H1 (cell line): ENCODE measurements at regions of chr2 and their contacts with region 1.

Region 1: GRCh38 chr2:22355816-22356433 is 1029.1 kb upstream of the KLHL29 start:
- DNase-seq: peak in 1 of 2 experiments; percentile 92
- H3K4me3 ChIP-seq: no peak overlapping the region
- H3K27ac ChIP-seq: no peak overlapping the region
- H3K4me1 ChIP-seq: peaks cover 0 to 4% (median 0%) of the 10 kb centered on the region in 4 experiments; a peak in 1 of 7 replicates
- H3K27me3 ChIP-seq: no peaks in the 10 kb centered on the region
- CTCF ChIP-seq: peak; percentile 64 to 84 (median 64)
- EP300 ChIP-seq: no peak
- POLR2A ChIP-seq: no peak
- RAD21 ChIP-seq: peak; percentile 80 to 84

Region 2: GRCh38 chr2:22329211-22330154 is 26.4 kb before region 1 on chr2:
- CTCF ChIA-PET with region 1: interaction called, 12 read pairs
- POLR2A ChIA-PET with region 1: no interaction called
- DNase-seq: no peak
- H3K4me3 ChIP-seq: no peak overlapping the region
- H3K27ac ChIP-seq: no peak overlapping the region
- H3K4me1 ChIP-seq: no peaks in the 10 kb centered on the region
- H3K27me3 ChIP-seq: no peaks in the 10 kb centered on the region
- CTCF ChIP-seq: no peak
- EP300 ChIP-seq: no peak
- POLR2A ChIP-seq: no peak
- RAD21 ChIP-seq: no peak

Region 3: DNA sequence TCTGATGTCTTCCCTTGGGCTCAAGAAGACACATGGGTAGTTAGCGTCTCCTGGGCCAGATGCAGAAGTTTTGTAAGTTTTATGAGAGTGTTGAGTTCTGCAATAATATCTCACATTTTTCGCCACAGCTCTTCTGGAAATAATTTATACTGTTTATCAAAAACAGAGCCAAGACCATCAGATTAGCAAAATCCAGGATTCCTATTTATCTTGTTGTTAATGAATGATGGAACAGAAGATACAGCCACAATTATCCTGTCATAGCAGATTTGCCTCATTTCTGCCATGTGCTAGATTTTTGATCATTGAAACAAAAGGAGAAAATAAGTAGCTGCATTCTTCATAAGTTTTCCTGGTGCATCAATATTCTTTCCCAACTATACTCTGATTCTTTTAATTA is 19.5 kb before region 1 on chr2:
- CTCF ChIA-PET with region 1: interaction called, 13 read pairs
- POLR2A ChIA-PET with region 1: no interaction called
- DNase-seq: no peak
- H3K4me3 ChIP-seq: no peak overlapping the region
- H3K27ac ChIP-seq: no peak overlapping the region
- H3K4me1 ChIP-seq: no peaks in the 10 kb centered on the region
- H3K27me3 ChIP-seq: no peaks in the 10 kb centered on the region
- CTCF ChIP-seq: no peak
- EP300 ChIP-seq: no peak
- POLR2A ChIP-seq: no peak
- RAD21 ChIP-seq: no peak

Region 4: GRCh38 chr2:22375096-22375495 is 19.2 kb after region 1 on chr2:
- CTCF ChIA-PET with region 1: interaction called, 23 read pairs
- POLR2A ChIA-PET with region 1: no interaction called
- DNase-seq: peak in 1 of 2 experiments; percentile 61
- H3K4me3 ChIP-seq: no peak overlapping the region
- H3K27ac ChIP-seq: no peak overlapping the region
- H3K4me1 ChIP-seq: peaks cover 0 to 3% (median 0%) of the 10 kb centered on the region in 4 experiments; a peak in 2 of 7 replicates
- H3K27me3 ChIP-seq: no peaks in the 10 kb centered on the region
- CTCF ChIP-seq: peak; percentile 54 to 70 (median 64)
- EP300 ChIP-seq: no peak
- POLR2A ChIP-seq: no peak
- RAD21 ChIP-seq: peak; percentile 40 to 60

Region 5: GRCh38 chr2:23335550-23335949 is 979.6 kb after region 1 on chr2:
- CTCF ChIA-PET with region 1: no interaction called
- POLR2A ChIA-PET with region 1: no interaction called
- DNase-seq: no peak
- H3K4me3 ChIP-seq: no peak overlapping the region
- H3K27ac ChIP-seq: no peak overlapping the region
- H3K4me1 ChIP-seq: no peaks in the 10 kb centered on the region
- H3K27me3 ChIP-seq: no peaks in the 10 kb centered on the region
- CTCF ChIP-seq: no peak
- EP300 ChIP-seq: no peak
- POLR2A ChIP-seq: no peak
- RAD21 ChIP-seq: no peak